Activated T-helper 1 cell treated with anti-CD3 and anti-CD28 coated beads, Interleukin-12 subunit alpha, Interleukin-12 subunit beta, Interleukin-2, Interleukin-4 antibody, amounts not matched to agents 30 ng/mL and 10 ng/mL and 1 ng/mL, durations not matched to agents 14 hours and 24 hours and 36 hours (primary cell): ENCODE measurements at regions of chrX and their contacts with region 1.

Region 1: GRCh38 chrX:51641421-51642021 is 22.8 kb upstream of the CENPVL3 start:
- DNase-seq: no peak
- H3K4me3 Mint-ChIP-seq: no peak overlapping the region
- H3K27ac Mint-ChIP-seq: no peak overlapping the region
- H3K4me1 Mint-ChIP-seq: no peaks in the 10 kb centered on the region
- H3K27me3 Mint-ChIP-seq: peaks cover 4% of the 10 kb centered on the region

Region 2: GRCh38 chrX:51098046-51098445 is 543.5 kb before region 1 on chrX:
- intact Hi-C with region 1: no loop called
- DNase-seq: no peak
- H3K4me3 Mint-ChIP-seq: no peak overlapping the region
- H3K27ac Mint-ChIP-seq: no peak overlapping the region
- H3K4me1 Mint-ChIP-seq: no peaks in the 10 kb centered on the region
- H3K27me3 Mint-ChIP-seq: no peaks in the 10 kb centered on the region

Region 3: GRCh38 chrX:51614353-51615012 is 27.0 kb before region 1 on chrX:
- intact Hi-C with region 1: no loop called
- DNase-seq: no peak
- H3K4me3 Mint-ChIP-seq: no peak overlapping the region
- H3K27ac Mint-ChIP-seq: no peak overlapping the region
- H3K4me1 Mint-ChIP-seq: no peaks in the 10 kb centered on the region
- H3K27me3 Mint-ChIP-seq: peaks cover 21% of the 10 kb centered on the region

Region 4: GRCh38 chrX:51860679-51861078 is 219.2 kb after region 1 on chrX:
- intact Hi-C with region 1: loop called (anchors 2 kb)
- DNase-seq: no peak
- H3K4me3 Mint-ChIP-seq: no peak overlapping the region
- H3K27ac Mint-ChIP-seq: no peak overlapping the region
- H3K4me1 Mint-ChIP-seq: peaks cover 6% of the 10 kb centered on the region
- H3K27me3 Mint-ChIP-seq: no peaks in the 10 kb centered on the region